Naive thymus-derived CD4-positive, alpha-beta T cell (primary cell): ENCODE measurements at regions of chr12 and their contacts with region 1.

Region 1: GRCh38 chr12:117134059-117134458 is 34.8 kb upstream of the TESC start:
- DNase-seq: peak in 8 of 9 donors; percentile 26 to 60 (median 44)
- ATAC-seq: peak; percentile 85
- H3K4me3 ChIP-seq: no peak overlapping the region
- H3K4me3 Mint-ChIP-seq: peak overlapping the region in 9 of 10 donors; percentile 4 to 63 (median 44)
- H3K27ac ChIP-seq: no peak overlapping the region
- H3K27ac Mint-ChIP-seq: peak overlapping the region in 7 of 9 donors; percentile 4 to 83 (median 60)
- H3K4me1 ChIP-seq: peaks cover 6 to 11% of the 10 kb centered on the region in 2 donors
- H3K4me1 Mint-ChIP-seq: peaks cover 9 to 17% (median 11%) of the 10 kb centered on the region in 7 donors
- H3K27me3 ChIP-seq: no peaks in the 10 kb centered on the region
- H3K27me3 Mint-ChIP-seq: no peaks in the 10 kb centered on the region

Region 2: GRCh38 chr12:117155278-117156060 is 21.4 kb after region 1 on chr12:
- CTCF ChIA-PET with region 1: interaction called, 3 read pairs
- POLR2A ChIA-PET with region 1: no interaction called
- intact Hi-C with region 1: loop called in 1 of 2 experiments (anchors 1 kb)
- DNase-seq: peak; percentile 49 to 75 (median 67)
- ATAC-seq: peak; percentile 87
- H3K4me3 ChIP-seq: no peak overlapping the region
- H3K4me3 Mint-ChIP-seq: no peak overlapping the region
- H3K27ac ChIP-seq: no peak overlapping the region
- H3K27ac Mint-ChIP-seq: peak overlapping the region in 1 of 9 donors; percentile 59
- H3K4me1 ChIP-seq: peaks cover 0 to 4% of the 10 kb centered on the region in 2 donors
- H3K4me1 Mint-ChIP-seq: peaks cover 2 to 26% (median 10%) of the 10 kb centered on the region in 7 donors
- H3K27me3 ChIP-seq: no peaks in the 10 kb centered on the region
- H3K27me3 Mint-ChIP-seq: peaks cover 0 to 2% (median 0%) of the 10 kb centered on the region in 5 donors